Gastrocnemius medialis (tissue), 4 donors: ENCODE measurements at regions of chr11 and their contacts with region 1.

Region 1: GRCh38 chr11:34357701-34358257 is at the start of gene ABTB2:
- DNase-seq: peak; percentile 97 to 98
- ATAC-seq: peak; percentile 66 to 77
- H3K4me3 ChIP-seq: peak within 1 kb of the TSS; percentile 69 to 93 (median 79)
- H3K27ac ChIP-seq: peak within 1 kb of the TSS; percentile 90 to 96 (median 91)
- H3K4me1 ChIP-seq: peaks cover 24 to 30% of the 10 kb centered on the region in 2 donors
- H3K27me3 ChIP-seq: peaks cover 0 to 11% (median 0%) of the 10 kb centered on the region in 3 donors
- CTCF ChIP-seq: no peak
- POLR2A ChIP-seq: peak; percentile 98 to 99
- total RNA-seq, gene ABTB2: 8.8 to 30.7 (median 12.2) TPM

Region 2: DNA sequence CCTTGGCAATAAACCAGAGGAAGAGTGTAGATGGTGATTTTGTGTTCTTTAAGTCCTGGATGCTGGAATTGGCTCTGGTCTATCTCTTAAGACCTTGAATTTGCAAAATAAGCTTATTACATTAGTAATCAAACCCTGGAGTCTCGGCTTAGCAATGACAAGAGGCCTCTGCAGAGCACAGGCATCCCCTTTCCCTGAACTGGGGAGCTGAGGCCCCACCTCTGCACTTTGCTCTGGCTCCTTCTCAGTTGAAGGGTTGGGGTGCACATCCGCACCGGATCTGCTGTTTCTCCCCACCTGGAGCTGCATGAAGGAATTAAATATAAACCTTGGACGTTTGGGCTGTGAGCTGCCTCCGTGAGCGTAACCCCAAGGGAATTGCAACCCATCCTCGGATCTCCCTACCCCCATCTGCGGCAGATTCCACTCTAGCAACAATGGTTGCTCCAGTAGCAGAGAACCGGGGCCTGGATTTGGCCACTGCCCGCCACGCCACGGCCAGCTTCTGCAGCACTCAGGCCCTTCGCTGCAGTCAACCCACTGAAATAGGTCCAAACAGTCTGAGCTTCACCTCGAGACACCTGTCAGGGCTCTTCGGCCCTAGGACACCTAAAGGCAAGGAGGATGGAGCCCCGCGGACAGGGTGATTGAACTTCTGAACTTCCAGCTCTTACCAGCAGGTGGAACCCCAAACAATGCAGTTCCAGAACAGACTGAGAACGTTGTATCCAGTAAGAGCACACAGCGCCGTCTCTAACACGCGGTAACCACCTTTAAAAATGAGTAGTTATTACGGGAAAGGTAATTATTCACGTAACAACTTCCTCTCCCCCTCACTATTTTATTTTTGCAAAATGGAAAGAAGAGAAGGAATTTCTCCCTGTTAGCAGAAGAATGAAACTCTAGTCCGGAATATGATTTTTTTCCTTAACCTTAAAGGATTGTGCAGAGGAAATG is 361.0 kb before region 1 on chr11:
- in situ Hi-C with region 1: loop called (anchors 5 to 25 kb)
- intact Hi-C with region 1: loop called (anchors 1 kb)
- DNase-seq: peak; percentile 41 to 63
- ATAC-seq: peak; percentile 98 to 99
- H3K4me3 ChIP-seq: peak overlapping the region in 1 of 4 donors; percentile 10
- H3K27ac ChIP-seq: no peak overlapping the region
- H3K4me1 ChIP-seq: no peaks in the 10 kb centered on the region
- H3K27me3 ChIP-seq: no peaks in the 10 kb centered on the region
- CTCF ChIP-seq: peak; percentile 71 to 83 (median 80)
- POLR2A ChIP-seq: no peak

Region 3: GRCh38 chr11:34174412-34175041 is 183.3 kb before region 1 on chr11:
- in situ Hi-C with region 1: loop called (anchors 5 kb)
- intact Hi-C with region 1: loop called (anchors 1 kb)
- DNase-seq: peak; percentile 62 to 68
- ATAC-seq: peak; percentile 84 to 93
- H3K4me3 ChIP-seq: peak overlapping the region; percentile 26 to 43 (median 33)
- H3K27ac ChIP-seq: peak overlapping the region in 3 of 4 donors; percentile 6 to 45 (median 12)
- H3K4me1 ChIP-seq: peaks cover 5 to 6% of the 10 kb centered on the region in 2 donors
- H3K27me3 ChIP-seq: no peaks in the 10 kb centered on the region
- CTCF ChIP-seq: peak; percentile 94 to 99 (median 97)
- POLR2A ChIP-seq: no peak

Region 4: GRCh38 chr11:34311126-34311525 is 46.7 kb before region 1 on chr11:
- in situ Hi-C with region 1: no loop called
- intact Hi-C with region 1: loop called (anchors 2 kb)
- DNase-seq: peak; percentile 26 to 74
- ATAC-seq: peak; percentile 88 to 89
- H3K4me3 ChIP-seq: no peak overlapping the region
- H3K27ac ChIP-seq: peak overlapping the region; percentile 80 to 88 (median 84)
- H3K4me1 ChIP-seq: peaks cover 50 to 69% of the 10 kb centered on the region in 2 donors
- H3K27me3 ChIP-seq: no peaks in the 10 kb centered on the region
- CTCF ChIP-seq: no peak
- POLR2A ChIP-seq: peak in 1 of 2 donors; percentile 54

Region 5: GRCh38 chr11:34438529-34439507 is 81.0 kb after region 1 on chr11 and contains the start of gene CAT:
- in situ Hi-C with region 1: no loop called
- intact Hi-C with region 1: loop called (anchors 1 kb)
- DNase-seq: peak; percentile 98
- ATAC-seq: peak; percentile 96
- H3K4me3 ChIP-seq: peak within 1 kb of the TSS; percentile 85 to 98 (median 89)
- H3K27ac ChIP-seq: peak within 1 kb of the TSS; percentile 95 to 96 (median 96)
- H3K4me1 ChIP-seq: peaks cover 25 to 50% of the 10 kb centered on the region in 2 donors
- H3K27me3 ChIP-seq: no peaks in the 10 kb centered on the region
- CTCF ChIP-seq: no peak
- POLR2A ChIP-seq: peak; percentile 78 to 79
- total RNA-seq, gene CAT: 107 to 150 (median 128) TPM